ENCODE measurements at regions of chr3 and their contacts with region 1.

Region 1: GRCh38 chr3:119352849-119353502 is 58.8 kb downstream of the ARHGAP31 start:
- DNase-seq: peak in 4 of 14 experiments; percentile 13 to 80 (median 64)
- ATAC-seq: peak; percentile 73
- H3K4me3 ChIP-seq: no peak overlapping the region
- H3K4me3 Mint-ChIP-seq: no peak overlapping the region
- H3K27ac ChIP-seq: no peak overlapping the region
- H3K27ac Mint-ChIP-seq: peak overlapping the region; percentile 58
- H3K4me1 ChIP-seq: peaks cover 21% of the 10 kb centered on the region
- H3K4me1 Mint-ChIP-seq: peaks cover 45% of the 10 kb centered on the region
- H3K27me3 ChIP-seq: no peaks in the 10 kb centered on the region
- H3K27me3 Mint-ChIP-seq: no peaks in the 10 kb centered on the region
- CTCF ChIP-seq: peak; percentile 56

Region 2: GRCh38 chr3:118884748-118885206 is 468.2 kb before region 1 on chr3:
- CTCF ChIA-PET with region 1: interaction called, 12 read pairs
- POLR2A ChIA-PET with region 1: no interaction called
- intact Hi-C with region 1: loop called in 1 of 2 experiments (anchors 2 kb)
- DNase-seq: peak; percentile 62 to 85 (median 74)
- ATAC-seq: peak; percentile 85
- H3K4me3 ChIP-seq: no peak overlapping the region
- H3K4me3 Mint-ChIP-seq: no peak overlapping the region
- H3K27ac ChIP-seq: no peak overlapping the region
- H3K27ac Mint-ChIP-seq: no peak overlapping the region
- H3K4me1 ChIP-seq: no peaks in the 10 kb centered on the region
- H3K4me1 Mint-ChIP-seq: no peaks in the 10 kb centered on the region
- H3K27me3 ChIP-seq: peaks cover 0 to 15% of the 10 kb centered on the region in 2 experiments
- H3K27me3 Mint-ChIP-seq: peaks cover 12% of the 10 kb centered on the region
- CTCF ChIP-seq: peak; percentile 96

Region 3: GRCh38 chr3:119145500-119146191 is 207.3 kb before region 1 on chr3 and contains the start of gene TEX55:
- CTCF ChIA-PET with region 1: interaction called, 3 read pairs
- POLR2A ChIA-PET with region 1: interaction called, 3 read pairs
- intact Hi-C with region 1: loop called (anchors 1 to 5 kb)
- DNase-seq: peak in 4 of 14 experiments; percentile 13 to 46 (median 34)
- ATAC-seq: peak; percentile 54
- H3K4me3 ChIP-seq: no peak within 1 kb of the TSS
- H3K4me3 Mint-ChIP-seq: no peak within 1 kb of the TSS
- H3K27ac ChIP-seq: no peak within 1 kb of the TSS
- H3K27ac Mint-ChIP-seq: no peak within 1 kb of the TSS
- H3K4me1 ChIP-seq: no peaks in the 10 kb centered on the region
- H3K4me1 Mint-ChIP-seq: no peaks in the 10 kb centered on the region
- H3K27me3 ChIP-seq: no peaks in the 10 kb centered on the region
- H3K27me3 Mint-ChIP-seq: no peaks in the 10 kb centered on the region
- CTCF ChIP-seq: peak; percentile 54
- total RNA-seq, gene TEX55: not detected

Region 4: GRCh38 chr3:119279101-119279554 is 73.8 kb before region 1 on chr3:
- CTCF ChIA-PET with region 1: interaction called, 7 read pairs
- POLR2A ChIA-PET with region 1: interaction called, 3 read pairs
- intact Hi-C with region 1: loop called in 1 of 2 experiments (anchors 1 kb)
- DNase-seq: no peak
- ATAC-seq: no peak
- H3K4me3 ChIP-seq: no peak overlapping the region
- H3K4me3 Mint-ChIP-seq: no peak overlapping the region
- H3K27ac ChIP-seq: no peak overlapping the region
- H3K27ac Mint-ChIP-seq: no peak overlapping the region
- H3K4me1 ChIP-seq: no peaks in the 10 kb centered on the region
- H3K4me1 Mint-ChIP-seq: peaks cover 20% of the 10 kb centered on the region
- H3K27me3 ChIP-seq: no peaks in the 10 kb centered on the region
- H3K27me3 Mint-ChIP-seq: no peaks in the 10 kb centered on the region
- CTCF ChIP-seq: no peak

Region 5: GRCh38 chr3:119322835-119323722 is 29.9 kb before region 1 on chr3:
- CTCF ChIA-PET with region 1: no interaction called
- POLR2A ChIA-PET with region 1: interaction called, 15 read pairs
- intact Hi-C with region 1: loop called in 1 of 2 experiments (anchors 2 kb)
- DNase-seq: peak; percentile 70 to 97 (median 84)
- ATAC-seq: peak; percentile 86
- H3K4me3 ChIP-seq: peak overlapping the region; percentile 79
- H3K4me3 Mint-ChIP-seq: peak overlapping the region; percentile 89
- H3K27ac ChIP-seq: peak overlapping the region; percentile 81 to 90
- H3K27ac Mint-ChIP-seq: peak overlapping the region; percentile 96
- H3K4me1 ChIP-seq: peaks cover 23% of the 10 kb centered on the region
- H3K4me1 Mint-ChIP-seq: peaks cover 32% of the 10 kb centered on the region
- H3K27me3 ChIP-seq: no peaks in the 10 kb centered on the region
- H3K27me3 Mint-ChIP-seq: no peaks in the 10 kb centered on the region
- CTCF ChIP-seq: no peak

Measured in CD4-positive, alpha-beta T cell (primary cell).